ENCODE measurements at regions of chr5 and their contacts with region 1.

Region 1: DNA sequence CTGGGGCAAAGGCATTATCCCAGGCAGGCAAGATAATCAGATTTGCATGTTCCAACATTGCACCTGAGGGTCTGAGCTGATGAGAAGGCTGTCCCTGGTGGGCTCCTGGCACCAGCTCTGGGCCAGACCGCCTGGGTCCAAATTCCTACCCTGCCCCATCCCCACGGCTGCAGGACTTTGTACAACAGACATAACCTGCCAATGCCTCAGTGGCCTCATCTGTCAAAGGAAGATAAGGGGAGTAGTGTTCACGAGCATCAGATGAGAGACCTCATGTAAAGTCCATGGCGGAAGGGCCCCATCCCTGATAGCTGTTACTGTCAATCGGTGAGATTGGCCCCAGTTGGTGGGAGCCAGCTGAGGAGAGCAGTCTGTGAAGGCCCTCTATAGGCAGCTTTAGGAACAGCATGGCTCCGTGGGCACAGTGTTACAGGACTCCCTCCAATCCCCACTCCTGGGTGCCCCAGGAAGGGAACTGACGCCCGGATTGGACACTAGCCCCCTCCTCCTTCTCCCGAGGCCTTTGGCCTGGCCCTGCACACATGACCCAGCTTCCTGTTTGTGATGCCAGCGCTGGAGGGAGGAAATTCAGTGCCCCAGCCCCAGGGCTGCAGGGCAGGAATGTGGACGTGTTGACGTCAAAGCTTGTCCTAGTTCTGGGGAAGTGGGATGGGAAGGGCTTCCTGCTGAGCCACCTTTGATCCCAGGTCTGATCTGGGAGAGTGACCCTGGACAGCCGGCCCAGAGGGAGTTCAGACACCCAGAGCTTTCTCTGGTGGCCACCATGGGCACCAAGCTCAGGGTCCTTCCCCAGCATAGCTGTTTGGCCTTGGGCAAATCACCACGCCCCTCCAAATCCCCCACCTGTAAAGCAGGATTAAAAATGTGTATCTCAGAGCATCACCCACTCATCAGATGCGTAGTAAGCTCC is 56.2 kb downstream of the DUSP1 start:
- DNase-seq: peak; percentile 89
- ATAC-seq: peak; percentile 71

Region 2: DNA sequence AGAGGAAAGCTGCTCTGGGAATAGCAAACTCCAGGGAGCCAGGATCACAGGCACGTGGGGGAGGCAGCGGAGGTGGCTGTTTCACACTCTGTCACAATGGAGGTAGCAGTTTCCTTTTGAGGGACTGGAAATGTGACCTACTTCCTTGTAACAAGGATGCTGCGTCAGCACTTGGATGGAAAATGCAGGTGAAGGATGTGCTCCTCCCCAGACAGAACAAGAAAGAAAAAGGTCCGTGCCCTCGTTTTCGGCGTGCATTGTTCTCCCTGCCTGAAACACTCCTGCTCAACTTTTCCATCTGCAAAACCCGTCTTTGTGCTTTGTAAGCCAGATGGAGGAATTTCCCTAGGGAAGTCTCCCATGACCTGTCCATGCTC is 205.4 kb before region 1 on chr5:
- intact Hi-C with region 1: no loop called
- DNase-seq: peak; percentile 53
- ATAC-seq: no peak

Region 3: DNA sequence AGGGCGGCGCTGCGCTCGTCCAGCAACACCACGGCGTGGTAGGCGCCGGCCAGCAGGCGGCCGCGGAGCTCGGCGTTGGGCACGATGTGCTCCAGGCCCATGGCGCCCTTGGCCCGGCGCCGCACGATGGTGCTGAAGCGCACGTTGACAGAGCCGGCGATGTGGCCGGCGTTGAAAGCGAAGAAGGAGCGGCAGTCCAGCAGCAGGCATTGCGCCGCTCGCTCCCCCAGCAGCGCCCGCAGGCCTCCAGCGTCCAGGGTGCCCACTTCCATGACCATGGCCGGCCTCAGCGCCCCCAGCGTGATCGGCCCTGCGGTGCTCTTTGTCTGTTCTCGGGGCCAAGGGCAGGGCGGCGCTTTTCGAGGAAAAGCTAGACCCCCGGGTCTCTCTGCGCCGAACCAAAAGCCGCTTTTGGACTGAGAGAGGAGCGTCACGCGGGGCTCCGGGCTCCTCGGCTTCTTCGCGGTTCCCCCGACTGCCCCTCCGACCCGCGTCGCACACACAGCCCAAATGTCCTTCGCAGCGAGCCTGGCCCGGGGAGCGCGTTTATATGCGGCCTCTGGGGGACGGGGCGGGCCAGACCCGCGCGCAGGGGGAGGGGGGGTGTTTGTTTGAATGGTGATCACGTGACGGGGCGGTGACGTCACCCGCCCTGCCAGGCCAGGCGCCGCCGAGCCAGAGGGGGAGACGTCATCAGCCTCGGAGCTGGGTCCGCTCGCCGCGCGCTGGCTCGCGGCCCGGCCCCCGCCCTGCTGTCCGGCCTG is 56.1 kb after region 1 on chr5 and contains the start of gene DUSP1:
- intact Hi-C with region 1: loop called (anchors 5 kb)
- DNase-seq: peak; percentile 100
- ATAC-seq: peak; percentile 68
- total RNA-seq, gene DUSP1: 296 TPM

Region 4: GRCh38 chr5:172932313-172933017 is 217.7 kb after region 1 on chr5:
- intact Hi-C with region 1: loop called (anchors 2 kb)
- DNase-seq: peak; percentile 82
- ATAC-seq: peak; percentile 88